ENCODE measurements at regions of chr2 and their contacts with region 1.

Region 1: DNA sequence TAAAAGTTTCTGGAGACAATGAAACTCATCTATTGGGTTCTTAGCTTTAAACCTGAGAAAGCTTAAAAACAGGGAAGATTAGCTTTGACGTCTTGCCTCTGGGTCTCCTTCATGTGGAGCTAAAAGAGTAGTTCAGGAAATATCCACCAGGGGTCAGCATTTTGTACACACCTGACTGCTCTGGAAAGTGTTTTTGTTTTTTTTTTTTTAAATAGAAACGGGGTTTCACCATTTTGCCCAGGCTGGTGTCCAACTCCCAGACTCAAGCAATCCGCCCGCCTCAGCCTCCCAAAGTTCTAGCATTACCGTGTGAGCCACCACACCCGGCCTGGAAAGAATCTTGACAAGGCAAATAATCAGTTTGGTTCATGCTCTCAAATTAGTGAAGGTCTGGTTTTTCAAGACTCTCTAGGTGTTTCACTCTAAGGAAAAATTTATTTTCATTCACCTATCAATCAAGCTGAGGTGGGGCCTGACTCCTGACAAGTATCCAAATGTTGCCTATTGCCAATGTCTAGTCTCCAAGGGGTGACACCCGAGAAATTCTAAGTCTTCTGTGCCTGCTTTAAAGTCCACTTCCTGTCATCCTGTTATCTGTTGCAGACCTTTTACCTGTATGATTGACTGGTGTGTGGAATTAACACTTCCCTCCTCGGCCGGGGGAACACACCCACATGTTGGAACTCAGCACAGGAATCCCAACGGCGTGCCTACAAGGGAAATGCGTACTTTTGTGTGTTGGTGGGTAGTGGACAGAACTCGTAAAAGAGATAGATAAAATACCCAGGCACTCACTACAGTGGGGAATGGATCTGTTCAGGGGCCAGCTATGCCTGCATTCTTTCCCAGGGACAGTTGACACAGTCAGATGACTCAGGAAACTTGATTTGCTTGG is 11.3 kb downstream of the IL1RN start:
- DNase-seq: peak; percentile 64
- ATAC-seq: peak; percentile 91
- H3K4me3 ChIP-seq: no peak overlapping the region
- H3K27ac ChIP-seq: no peak overlapping the region
- H3K4me1 ChIP-seq: peaks cover 4% of the 10 kb centered on the region; the same call in 1 of the 2 replicates
- H3K27me3 ChIP-seq: no peaks in the 10 kb centered on the region
- CTCF ChIP-seq: peak; percentile 66 to 77 (median 76)
- EP300 ChIP-seq: no peak
- POLR2A ChIP-seq: no peak
- RAD21 ChIP-seq: peak; percentile 71

Region 2: GRCh38 chr2:112850588-112850987 is 288.1 kb before region 1 on chr2:
- CTCF ChIA-PET with region 1: no interaction called
- POLR2A ChIA-PET with region 1: no interaction called
- RAD21 ChIA-PET with region 1: no interaction called
- SMC1A ChIA-PET with region 1: no interaction called
- in situ Hi-C with region 1: no loop called
- intact Hi-C with region 1: no loop called
- DNase-seq: no peak
- ATAC-seq: no peak
- H3K4me3 ChIP-seq: no peak overlapping the region
- H3K27ac ChIP-seq: no peak overlapping the region
- H3K4me1 ChIP-seq: no peaks in the 10 kb centered on the region; the same call in 1 of the 2 replicates
- H3K27me3 ChIP-seq: no peaks in the 10 kb centered on the region
- CTCF ChIP-seq: no peak
- EP300 ChIP-seq: no peak
- POLR2A ChIP-seq: no peak
- RAD21 ChIP-seq: no peak

Region 3: GRCh38 chr2:112985090-112985489 is 153.6 kb before region 1 on chr2:
- CTCF ChIA-PET with region 1: no interaction called
- POLR2A ChIA-PET with region 1: no interaction called
- RAD21 ChIA-PET with region 1: no interaction called
- SMC1A ChIA-PET with region 1: no interaction called
- in situ Hi-C with region 1: no loop called
- intact Hi-C with region 1: no loop called
- DNase-seq: no peak
- ATAC-seq: no peak
- H3K4me3 ChIP-seq: no peak overlapping the region
- H3K27ac ChIP-seq: no peak overlapping the region
- H3K4me1 ChIP-seq: peaks cover 2% of the 10 kb centered on the region; the same call in 1 of the 2 replicates
- H3K27me3 ChIP-seq: no peaks in the 10 kb centered on the region
- CTCF ChIP-seq: no peak
- EP300 ChIP-seq: no peak
- POLR2A ChIP-seq: no peak
- RAD21 ChIP-seq: no peak

Region 4: GRCh38 chr2:113080134-113080533 is 58.5 kb before region 1 on chr2:
- CTCF ChIA-PET with region 1: interaction called, 182 read pairs
- POLR2A ChIA-PET with region 1: no interaction called
- RAD21 ChIA-PET with region 1: interaction called, 33 read pairs
- SMC1A ChIA-PET with region 1: interaction called, 14 read pairs
- in situ Hi-C with region 1: no loop called
- intact Hi-C with region 1: loop called (anchors 2 kb)
- DNase-seq: no peak
- ATAC-seq: peak; percentile 88
- H3K4me3 ChIP-seq: no peak overlapping the region
- H3K27ac ChIP-seq: no peak overlapping the region
- H3K4me1 ChIP-seq: no peaks in the 10 kb centered on the region
- H3K27me3 ChIP-seq: no peaks in the 10 kb centered on the region; a peak in 1 of 4 replicates
- CTCF ChIP-seq: peak; percentile 86 to 89 (median 87)
- EP300 ChIP-seq: no peak
- POLR2A ChIP-seq: no peak
- RAD21 ChIP-seq: peak; percentile 82

Region 5: DNA sequence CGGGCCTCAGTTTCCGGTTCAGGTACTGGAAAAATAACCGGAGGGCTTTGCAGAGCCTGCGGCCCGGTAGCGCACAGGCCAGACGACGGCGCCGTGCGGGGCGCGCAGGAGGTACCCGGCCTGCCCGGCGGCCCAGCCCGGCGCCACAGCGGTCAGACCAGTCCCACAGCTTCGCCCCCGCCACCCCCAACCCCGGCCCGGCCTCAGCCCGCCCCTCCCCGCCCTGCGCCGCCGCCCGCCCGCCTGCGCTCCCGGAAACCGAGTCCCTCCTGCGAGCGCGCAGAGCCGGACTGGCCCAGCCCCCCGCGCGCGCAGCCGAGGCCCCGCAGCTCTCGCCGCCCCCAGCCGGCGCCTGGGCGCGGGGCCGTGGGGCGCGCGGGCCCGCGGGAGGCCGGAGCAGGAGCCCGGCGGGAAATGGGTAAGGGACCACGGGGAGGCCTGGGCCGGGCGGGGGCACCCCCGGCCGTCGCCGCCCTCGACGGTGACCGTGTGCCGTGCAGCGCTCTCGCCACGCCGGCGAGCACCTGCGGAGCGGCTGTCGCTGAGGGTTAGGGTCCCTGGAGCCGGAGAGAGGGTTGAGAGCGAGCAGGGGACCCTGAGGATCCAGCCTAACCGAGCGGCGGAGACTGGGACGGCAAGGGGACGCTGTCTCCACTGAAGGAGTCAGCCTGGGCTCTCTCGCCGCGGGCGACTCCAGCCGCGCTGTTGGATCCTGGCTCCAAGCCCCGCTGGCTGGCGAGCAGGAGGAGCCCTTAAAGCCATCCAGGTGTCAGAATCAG is 18.6 kb after region 1 on chr2:
- CTCF ChIA-PET with region 1: interaction called, 29 read pairs
- POLR2A ChIA-PET with region 1: no interaction called
- RAD21 ChIA-PET with region 1: no interaction called
- SMC1A ChIA-PET with region 1: interaction called, 6 read pairs
- in situ Hi-C with region 1: no loop called
- intact Hi-C with region 1: no loop called
- DNase-seq: no peak
- ATAC-seq: peak; percentile 71
- H3K4me3 ChIP-seq: peak overlapping the region; percentile 35; the same call in 1 of the 2 replicates
- H3K27ac ChIP-seq: no peak overlapping the region
- H3K4me1 ChIP-seq: peaks cover 12% of the 10 kb centered on the region
- H3K27me3 ChIP-seq: peaks cover 0 to 3% of the 10 kb centered on the region in 2 experiments; a peak in 1 of 4 replicates
- CTCF ChIP-seq: no peak
- EP300 ChIP-seq: no peak
- POLR2A ChIP-seq: no peak
- RAD21 ChIP-seq: no peak

Region 6: DNA sequence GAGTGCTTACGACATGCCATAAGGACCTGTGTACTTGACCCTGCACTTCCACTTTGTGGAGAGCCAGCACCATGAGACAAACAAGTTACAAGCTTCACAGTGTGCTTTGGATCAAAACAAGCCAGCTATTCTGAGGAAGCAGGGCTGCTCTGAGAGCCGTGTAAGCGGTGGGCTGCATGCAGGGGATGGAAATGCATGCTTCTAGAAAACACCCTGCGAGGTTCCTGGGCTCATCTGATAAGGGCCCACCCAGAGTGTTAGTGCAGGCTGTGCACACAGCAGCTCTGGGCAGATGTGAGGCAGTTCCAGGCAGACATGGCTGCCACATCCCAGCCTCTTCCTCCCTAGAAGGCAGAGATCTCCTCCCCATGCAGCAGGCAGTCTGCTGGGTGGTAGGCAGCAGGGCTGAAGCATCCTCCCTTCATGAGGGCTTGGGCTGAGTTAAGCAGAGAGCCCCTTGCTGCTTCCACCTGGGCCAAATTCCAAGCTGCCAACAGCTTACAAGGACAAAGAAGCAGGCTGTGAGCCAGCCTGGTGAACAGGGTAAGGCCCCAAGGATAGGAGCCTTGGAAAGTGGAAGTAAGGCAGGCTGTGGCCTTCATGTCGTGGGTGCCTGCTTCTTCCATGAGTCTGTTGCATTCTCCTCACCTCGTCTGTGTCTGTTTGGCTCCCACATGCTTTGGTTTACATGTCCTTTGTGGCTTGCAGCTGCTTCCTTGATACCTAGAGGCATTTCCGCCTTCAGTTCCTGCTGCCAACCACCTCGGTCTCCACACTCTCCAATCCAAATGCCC is 42.8 kb after region 1 on chr2:
- CTCF ChIA-PET with region 1: interaction called, 195 read pairs
- POLR2A ChIA-PET with region 1: interaction called, 7 read pairs
- RAD21 ChIA-PET with region 1: interaction called, 75 read pairs
- SMC1A ChIA-PET with region 1: interaction called, 52 read pairs
- in situ Hi-C with region 1: no loop called
- intact Hi-C with region 1: no loop called
- DNase-seq: no peak
- ATAC-seq: peak; percentile 18
- H3K4me3 ChIP-seq: no peak overlapping the region
- H3K27ac ChIP-seq: no peak overlapping the region
- H3K4me1 ChIP-seq: peaks cover 31% of the 10 kb centered on the region
- H3K27me3 ChIP-seq: no peaks in the 10 kb centered on the region
- CTCF ChIP-seq: no peak
- EP300 ChIP-seq: no peak
- POLR2A ChIP-seq: no peak
- RAD21 ChIP-seq: no peak

Region 7: DNA sequence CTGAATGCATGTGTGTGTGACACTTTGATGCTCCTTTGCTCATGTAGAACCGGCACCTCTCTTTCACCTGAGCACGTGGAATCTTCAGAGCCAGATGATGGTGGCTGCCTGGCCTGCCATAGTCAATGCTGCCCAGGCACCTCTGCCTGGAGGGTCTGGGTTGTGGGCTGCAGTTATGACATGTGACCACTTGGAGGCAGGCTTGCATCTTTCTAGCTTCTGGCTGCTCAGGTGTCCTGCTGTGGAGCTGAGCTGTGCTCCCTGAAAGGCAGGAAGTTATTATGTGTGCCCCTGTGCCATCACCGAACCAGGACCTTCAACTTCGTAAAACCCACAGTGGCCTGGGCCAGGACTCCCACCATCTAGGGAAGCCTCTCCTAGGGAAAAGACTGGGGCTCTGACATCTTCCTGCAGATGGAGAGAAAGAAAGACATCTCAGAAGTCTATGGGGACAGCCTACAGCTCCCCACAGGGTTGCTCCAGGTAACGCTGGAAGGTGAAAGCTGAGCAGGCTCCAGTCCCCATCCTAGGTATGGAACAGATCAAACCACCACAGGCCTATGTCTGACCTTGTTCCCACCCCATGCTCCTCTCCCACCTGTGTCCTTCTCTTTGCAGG is 65.3 kb after region 1 on chr2:
- CTCF ChIA-PET with region 1: interaction called, 105 read pairs
- POLR2A ChIA-PET with region 1: interaction called, 6 read pairs
- RAD21 ChIA-PET with region 1: interaction called, 37 read pairs
- SMC1A ChIA-PET with region 1: interaction called, 43 read pairs
- in situ Hi-C with region 1: no loop called
- intact Hi-C with region 1: loop called (anchors 1 kb)
- DNase-seq: peak; percentile 30
- ATAC-seq: peak; percentile 88
- H3K4me3 ChIP-seq: no peak overlapping the region
- H3K27ac ChIP-seq: no peak overlapping the region
- H3K4me1 ChIP-seq: no peaks in the 10 kb centered on the region
- H3K27me3 ChIP-seq: no peaks in the 10 kb centered on the region
- CTCF ChIP-seq: peak; percentile 84 to 90 (median 89)
- EP300 ChIP-seq: no peak
- POLR2A ChIP-seq: peak; percentile 58
- RAD21 ChIP-seq: peak; percentile 71

Region 8: GRCh38 chr2:113258471-113259147 is 119.9 kb after region 1 on chr2:
- CTCF ChIA-PET with region 1: no interaction called
- POLR2A ChIA-PET with region 1: no interaction called
- RAD21 ChIA-PET with region 1: no interaction called
- SMC1A ChIA-PET with region 1: no interaction called
- in situ Hi-C with region 1: no loop called
- intact Hi-C with region 1: no loop called
- DNase-seq: no peak
- ATAC-seq: no peak
- H3K4me3 ChIP-seq: no peak overlapping the region
- H3K27ac ChIP-seq: no peak overlapping the region
- H3K4me1 ChIP-seq: no peaks in the 10 kb centered on the region
- H3K27me3 ChIP-seq: no peaks in the 10 kb centered on the region
- CTCF ChIP-seq: no peak
- EP300 ChIP-seq: no peak
- POLR2A ChIP-seq: no peak
- RAD21 ChIP-seq: no peak

Region 9: GRCh38 chr2:113370478-113371091 is 231.9 kb after region 1 on chr2:
- CTCF ChIA-PET with region 1: interaction called, 20 read pairs
- POLR2A ChIA-PET with region 1: no interaction called
- RAD21 ChIA-PET with region 1: interaction called, 13 read pairs
- SMC1A ChIA-PET with region 1: interaction called, 7 read pairs
- in situ Hi-C with region 1: loop called (anchors 5 kb)
- intact Hi-C with region 1: loop called (anchors 1 kb)
- DNase-seq: peak; percentile 23
- ATAC-seq: peak; percentile 96
- H3K4me3 ChIP-seq: no peak overlapping the region
- H3K27ac ChIP-seq: no peak overlapping the region
- H3K4me1 ChIP-seq: no peaks in the 10 kb centered on the region
- H3K27me3 ChIP-seq: no peaks in the 10 kb centered on the region; a peak in 1 of 4 replicates
- CTCF ChIP-seq: peak; percentile 44 to 61 (median 53); a peak in 5 of 6 replicates
- EP300 ChIP-seq: no peak
- POLR2A ChIP-seq: no peak
- RAD21 ChIP-seq: peak; percentile 73